Activated B cell treated with CpG ODN at 0.5 μM for 24 hours (primary cell): ENCODE measurements at regions of chr12 and their contacts with region 1.

Region 1: DNA sequence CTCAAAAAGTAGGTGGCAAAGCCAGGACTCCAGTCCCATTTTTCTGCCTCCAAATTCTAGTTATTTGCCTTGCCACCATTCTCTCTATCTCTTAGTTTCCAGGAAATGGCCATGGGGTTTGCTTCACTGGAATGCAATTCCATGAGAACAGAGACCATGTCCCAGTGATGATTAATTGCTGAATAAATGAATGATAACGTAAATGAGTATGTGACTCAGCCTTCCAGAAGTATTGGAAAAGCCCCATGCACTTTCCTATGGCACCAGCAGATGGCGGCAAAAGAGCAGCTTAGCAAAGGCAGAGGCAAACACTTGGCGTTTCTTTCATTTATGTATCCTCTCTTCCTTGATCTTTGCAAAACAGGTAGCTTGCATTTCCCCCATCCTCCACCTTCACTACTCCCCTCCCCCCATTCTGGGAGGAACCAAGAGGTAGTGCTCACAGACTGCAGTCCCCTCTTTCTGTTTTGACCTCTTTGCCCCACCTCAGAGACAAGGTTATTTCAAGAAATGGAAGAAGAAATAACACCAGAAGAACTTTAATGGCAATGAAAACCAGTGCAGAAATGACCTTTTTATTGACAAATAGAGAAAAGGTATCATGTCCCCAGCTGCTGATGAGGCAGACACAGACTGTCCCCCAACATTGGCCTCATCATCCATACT is 21.3 kb downstream of the TBX3 start:
- DNase-seq: peak; percentile 44
- ATAC-seq: no peak
- H3K4me3 Mint-ChIP-seq: no peak overlapping the region
- H3K27ac Mint-ChIP-seq: no peak overlapping the region
- H3K4me1 Mint-ChIP-seq: no peaks in the 10 kb centered on the region
- H3K27me3 Mint-ChIP-seq: peaks cover 45% of the 10 kb centered on the region
- CTCF ChIP-seq: no peak

Region 2: GRCh38 chr12:114226241-114226928 is 436.3 kb before region 1 on chr12:
- CTCF ChIA-PET with region 1: no interaction called
- POLR2A ChIA-PET with region 1: no interaction called
- intact Hi-C with region 1: no loop called
- DNase-seq: no peak
- ATAC-seq: no peak
- H3K4me3 Mint-ChIP-seq: no peak overlapping the region
- H3K27ac Mint-ChIP-seq: no peak overlapping the region
- H3K4me1 Mint-ChIP-seq: no peaks in the 10 kb centered on the region
- H3K27me3 Mint-ChIP-seq: peaks cover 11% of the 10 kb centered on the region
- CTCF ChIP-seq: no peak

Region 3: GRCh38 chr12:114684098-114684869 is 21.6 kb after region 1 on chr12 and contains the start of gene TBX3:
- CTCF ChIA-PET with region 1: no interaction called
- POLR2A ChIA-PET with region 1: no interaction called
- intact Hi-C with region 1: no loop called
- DNase-seq: no peak
- ATAC-seq: peak; percentile 57
- H3K4me3 Mint-ChIP-seq: peak within 1 kb of the TSS; percentile 79
- H3K27ac Mint-ChIP-seq: no peak within 1 kb of the TSS
- H3K4me1 Mint-ChIP-seq: peaks cover 23% of the 10 kb centered on the region
- H3K27me3 Mint-ChIP-seq: peaks cover 86% of the 10 kb centered on the region
- CTCF ChIP-seq: no peak
- total RNA-seq, gene TBX3: not detected in 2 replicates

Region 4: GRCh38 chr12:115632308-115632707 is 969.7 kb after region 1 on chr12:
- CTCF ChIA-PET with region 1: no interaction called
- POLR2A ChIA-PET with region 1: no interaction called
- intact Hi-C with region 1: loop called (anchors 10 kb)
- DNase-seq: no peak
- ATAC-seq: no peak
- H3K4me3 Mint-ChIP-seq: no peak overlapping the region
- H3K27ac Mint-ChIP-seq: no peak overlapping the region
- H3K4me1 Mint-ChIP-seq: no peaks in the 10 kb centered on the region
- H3K27me3 Mint-ChIP-seq: no peaks in the 10 kb centered on the region
- CTCF ChIP-seq: no peak

Region 5: DNA sequence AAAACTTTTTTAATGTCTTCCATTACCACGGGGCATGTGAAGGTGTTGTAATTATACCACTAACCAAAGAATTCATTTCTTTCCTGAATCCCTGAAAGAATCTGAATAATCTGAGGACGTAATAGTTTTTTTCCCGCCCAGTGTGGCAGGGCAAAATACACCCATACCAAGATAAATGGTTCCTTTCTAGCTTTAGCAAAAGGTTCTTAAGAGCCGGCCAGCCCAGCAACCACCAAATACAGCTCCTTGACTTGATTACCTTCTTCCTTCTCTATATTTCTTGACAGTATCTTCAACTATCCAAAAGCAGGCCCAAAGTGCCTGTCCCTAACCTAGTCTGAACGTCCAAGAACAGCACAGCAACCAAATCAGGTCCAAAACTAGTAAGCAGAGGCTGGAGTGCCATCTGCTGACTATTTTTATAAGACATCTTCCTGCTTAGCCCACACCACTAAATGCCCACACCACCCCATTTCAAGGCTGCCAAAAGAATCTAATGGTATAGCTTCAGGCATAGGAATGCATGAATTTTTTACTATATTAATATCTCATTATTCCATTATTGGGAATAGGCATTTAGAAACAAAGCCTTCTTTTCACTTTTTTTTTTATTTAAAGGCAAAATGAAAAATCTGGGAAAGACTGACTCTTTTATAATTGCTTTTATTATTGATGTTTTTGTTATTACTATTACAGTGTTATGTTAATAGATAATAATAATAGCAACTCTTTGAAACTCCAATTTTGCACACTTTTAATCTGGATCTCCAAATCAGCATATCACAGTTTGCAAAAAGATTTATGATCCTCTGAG is 1090.5 kb after region 1 on chr12:
- CTCF ChIA-PET with region 1: interaction called, 3 read pairs
- POLR2A ChIA-PET with region 1: no interaction called
- intact Hi-C with region 1: loop called (anchors 1 kb)
- DNase-seq: no peak
- ATAC-seq: no peak
- H3K4me3 Mint-ChIP-seq: no peak overlapping the region
- H3K27ac Mint-ChIP-seq: no peak overlapping the region
- H3K4me1 Mint-ChIP-seq: no peaks in the 10 kb centered on the region
- H3K27me3 Mint-ChIP-seq: peaks cover 11% of the 10 kb centered on the region
- CTCF ChIP-seq: no peak

Region 6: DNA sequence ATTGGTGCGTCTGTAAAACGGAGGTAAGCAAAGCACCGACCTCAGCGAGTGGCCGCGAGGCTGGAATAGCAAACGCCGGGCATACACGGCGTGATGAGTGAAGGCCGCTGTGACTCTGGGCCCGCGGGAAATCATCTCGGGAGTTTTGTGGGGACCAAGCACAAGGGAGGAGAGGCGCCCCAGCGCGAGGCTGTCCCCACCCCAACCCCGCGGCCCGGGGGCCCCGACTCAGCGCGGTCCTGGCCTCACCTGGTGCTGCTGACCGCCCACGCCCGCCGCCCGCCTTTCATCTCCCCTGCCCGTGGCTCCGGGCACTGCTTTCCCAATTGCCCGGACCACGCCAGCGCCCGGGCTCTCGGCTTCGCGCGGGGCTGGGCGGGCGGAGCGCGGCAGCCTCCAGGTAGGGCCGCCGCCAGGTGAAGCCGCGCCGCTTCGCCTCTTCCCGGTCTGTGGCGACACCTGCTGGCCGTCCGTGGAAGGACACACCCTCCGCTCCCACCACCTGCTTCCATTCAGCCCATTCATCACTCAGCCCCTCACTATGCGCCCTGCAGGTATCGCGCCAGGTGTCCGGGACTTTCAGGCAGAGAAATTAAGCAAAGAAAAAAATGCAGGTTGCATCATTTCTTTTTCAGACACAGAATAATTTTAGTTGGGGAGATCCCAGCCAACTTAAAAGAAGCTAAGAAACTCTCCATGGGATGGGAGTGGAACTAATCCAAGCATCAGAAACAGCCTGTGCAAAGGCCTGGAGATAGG is 1254.4 kb after region 1 on chr12:
- CTCF ChIA-PET with region 1: interaction called, 18 read pairs
- POLR2A ChIA-PET with region 1: no interaction called
- intact Hi-C with region 1: loop called (anchors 1 kb)
- DNase-seq: peak; percentile 64
- ATAC-seq: peak; percentile 58
- H3K4me3 Mint-ChIP-seq: peak overlapping the region; percentile 38
- H3K27ac Mint-ChIP-seq: no peak overlapping the region
- H3K4me1 Mint-ChIP-seq: peaks cover 2% of the 10 kb centered on the region
- H3K27me3 Mint-ChIP-seq: peaks cover 50% of the 10 kb centered on the region
- CTCF ChIP-seq: peak; percentile 80